ENCODE measurements at regions of chr5 and their contacts with region 1.

Region 1: DNA sequence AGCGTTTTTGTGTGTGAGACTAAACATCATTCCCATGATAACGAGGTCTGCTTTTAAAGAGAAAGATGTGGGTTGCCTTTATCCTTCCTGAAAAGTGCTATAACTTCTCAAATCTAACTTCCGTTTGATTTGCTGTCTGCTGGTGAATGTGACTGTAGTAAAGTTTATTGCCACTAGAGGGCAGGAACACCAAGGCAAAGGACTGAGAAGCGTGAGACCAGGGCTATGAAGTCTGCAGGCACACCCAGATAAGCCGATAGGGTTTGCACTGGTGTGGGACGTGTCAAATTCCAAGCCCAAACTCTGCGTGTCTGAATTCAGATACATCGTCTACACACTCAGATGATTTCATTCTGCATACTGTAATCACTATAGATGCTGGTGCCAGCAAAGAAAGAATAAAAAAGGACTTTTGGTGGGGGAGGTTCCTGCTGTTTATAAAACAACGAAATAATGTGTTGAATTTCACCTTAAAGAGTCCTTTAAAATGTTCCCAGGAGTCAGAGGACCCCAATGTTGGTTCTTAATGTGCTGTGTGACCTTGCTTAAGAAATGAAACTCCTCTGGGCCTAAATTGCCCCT is 87.2 kb downstream of the PTTG1 start:
- DNase-seq: peak; percentile 93
- H3K4me3 Mint-ChIP-seq: peak overlapping the region; percentile 31
- H3K27ac Mint-ChIP-seq: peak overlapping the region; percentile 67
- H3K4me1 Mint-ChIP-seq: peaks cover 52% of the 10 kb centered on the region
- H3K27me3 Mint-ChIP-seq: peaks cover 5% of the 10 kb centered on the region

Region 2: GRCh38 chr5:160467555-160468362 is 41.1 kb before region 1 on chr5:
- intact Hi-C with region 1: loop called (anchors 1 kb)
- DNase-seq: peak; percentile 96
- H3K4me3 Mint-ChIP-seq: peak overlapping the region; percentile 100
- H3K27ac Mint-ChIP-seq: peak overlapping the region; percentile 100
- H3K4me1 Mint-ChIP-seq: peaks cover 62% of the 10 kb centered on the region
- H3K27me3 Mint-ChIP-seq: no peaks in the 10 kb centered on the region

Region 3: GRCh38 chr5:160539431-160539830 is 30.6 kb after region 1 on chr5:
- intact Hi-C with region 1: loop called (anchors 1 kb)
- DNase-seq: peak; percentile 64
- H3K4me3 Mint-ChIP-seq: no peak overlapping the region
- H3K27ac Mint-ChIP-seq: no peak overlapping the region
- H3K4me1 Mint-ChIP-seq: peaks cover 9% of the 10 kb centered on the region
- H3K27me3 Mint-ChIP-seq: no peaks in the 10 kb centered on the region

Region 4: GRCh38 chr5:160846642-160847041 is 337.8 kb after region 1 on chr5:
- intact Hi-C with region 1: loop called (anchors 2 kb)
- DNase-seq: no peak
- H3K4me3 Mint-ChIP-seq: no peak overlapping the region
- H3K27ac Mint-ChIP-seq: no peak overlapping the region
- H3K4me1 Mint-ChIP-seq: no peaks in the 10 kb centered on the region
- H3K27me3 Mint-ChIP-seq: no peaks in the 10 kb centered on the region